Transverse colon (tissue), 4 donors: ENCODE measurements at regions of chr17 and their contacts with region 1.

Region 1: GRCh38 chr17:67475236-67475937 is 98.3 kb downstream of the PITPNC1 start:
- DNase-seq: peak; percentile 86
- H3K4me3 ChIP-seq: no peak overlapping the region
- H3K27ac ChIP-seq: peak overlapping the region; percentile 31 to 65 (median 42)
- H3K4me1 ChIP-seq: peaks cover 0 to 16% (median 2%) of the 10 kb centered on the region in 4 donors
- H3K27me3 ChIP-seq: no peaks in the 10 kb centered on the region
- CTCF ChIP-seq: peak; percentile 82 to 93 (median 92)
- EP300 ChIP-seq: no peak
- POLR2A ChIP-seq: peak; percentile 14

Region 2: GRCh38 chr17:67602956-67603355 is 127.6 kb after region 1 on chr17:
- in situ Hi-C with region 1: loop called in 1 of 4 experiments (anchors 25 kb)
- intact Hi-C with region 1: no loop called
- DNase-seq: peak; percentile 22
- H3K4me3 ChIP-seq: no peak overlapping the region
- H3K27ac ChIP-seq: no peak overlapping the region
- H3K4me1 ChIP-seq: peaks cover 0 to 9% (median 0%) of the 10 kb centered on the region in 4 donors
- H3K27me3 ChIP-seq: no peaks in the 10 kb centered on the region
- CTCF ChIP-seq: peak in 4 of 5 experiments; percentile 29 to 34 (median 32)
- EP300 ChIP-seq: no peak
- POLR2A ChIP-seq: no peak

Region 3: DNA sequence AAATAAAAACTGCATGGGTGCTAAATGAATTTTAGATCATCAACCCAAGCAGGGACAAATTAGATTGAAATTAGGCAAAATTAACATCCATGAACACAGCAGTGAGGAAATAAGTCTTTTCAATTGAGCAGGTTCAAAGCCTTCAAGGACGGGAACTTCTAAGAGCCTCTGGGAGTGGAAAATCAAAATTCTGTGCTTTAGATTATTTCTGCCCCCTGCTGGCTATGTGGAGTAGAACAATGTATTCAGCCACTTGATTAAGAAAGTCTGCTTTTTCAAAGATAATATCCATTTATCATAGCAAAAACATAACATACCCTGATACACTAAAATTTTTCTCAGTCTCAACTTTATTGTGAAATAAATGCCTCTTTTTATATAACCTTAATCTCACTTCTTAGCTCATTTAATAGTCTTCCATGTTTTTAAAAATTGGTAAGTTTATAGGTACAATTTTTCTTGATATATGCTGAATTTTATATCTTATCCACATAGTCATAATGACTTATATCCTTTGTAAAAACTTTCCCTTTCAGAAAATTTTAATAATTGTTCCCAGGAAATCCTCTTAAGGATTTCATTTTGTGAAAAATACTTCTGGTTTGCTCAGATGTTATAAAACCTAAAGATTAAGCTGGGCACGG is 214.3 kb after region 1 on chr17:
- in situ Hi-C with region 1: loop called in 1 of 4 experiments (anchors 25 kb)
- intact Hi-C with region 1: no loop called
- DNase-seq: peak; percentile 27
- H3K4me3 ChIP-seq: no peak overlapping the region
- H3K27ac ChIP-seq: no peak overlapping the region
- H3K4me1 ChIP-seq: no peaks in the 10 kb centered on the region
- H3K27me3 ChIP-seq: no peaks in the 10 kb centered on the region
- CTCF ChIP-seq: peak; percentile 71 to 81 (median 77)
- EP300 ChIP-seq: no peak
- POLR2A ChIP-seq: no peak

Region 4: GRCh38 chr17:67891581-67892054 is 416.2 kb after region 1 on chr17:
- in situ Hi-C with region 1: no loop called
- intact Hi-C with region 1: no loop called
- DNase-seq: peak; percentile 14
- H3K4me3 ChIP-seq: no peak overlapping the region
- H3K27ac ChIP-seq: no peak overlapping the region
- H3K4me1 ChIP-seq: peaks cover 0 to 6% (median 2%) of the 10 kb centered on the region in 4 donors
- H3K27me3 ChIP-seq: no peaks in the 10 kb centered on the region
- CTCF ChIP-seq: peak in 2 of 5 experiments; percentile 16 to 17
- EP300 ChIP-seq: no peak
- POLR2A ChIP-seq: no peak